ENCODE measurements at regions of chr22 and their contacts with region 1.

Region 1: GRCh38 chr22:27804470-27805297 is 3.1 kb upstream of the MN1 start:
- DNase-seq: no peak
- H3K4me3 ChIP-seq: no peak overlapping the region
- H3K27ac ChIP-seq: no peak overlapping the region
- H3K4me1 ChIP-seq: peaks cover 34% of the 10 kb centered on the region
- H3K27me3 ChIP-seq: no peaks in the 10 kb centered on the region
- CTCF ChIP-seq: peak; percentile 37 to 62 (median 52)
- POLR2A ChIP-seq: no peak

Region 2: DNA sequence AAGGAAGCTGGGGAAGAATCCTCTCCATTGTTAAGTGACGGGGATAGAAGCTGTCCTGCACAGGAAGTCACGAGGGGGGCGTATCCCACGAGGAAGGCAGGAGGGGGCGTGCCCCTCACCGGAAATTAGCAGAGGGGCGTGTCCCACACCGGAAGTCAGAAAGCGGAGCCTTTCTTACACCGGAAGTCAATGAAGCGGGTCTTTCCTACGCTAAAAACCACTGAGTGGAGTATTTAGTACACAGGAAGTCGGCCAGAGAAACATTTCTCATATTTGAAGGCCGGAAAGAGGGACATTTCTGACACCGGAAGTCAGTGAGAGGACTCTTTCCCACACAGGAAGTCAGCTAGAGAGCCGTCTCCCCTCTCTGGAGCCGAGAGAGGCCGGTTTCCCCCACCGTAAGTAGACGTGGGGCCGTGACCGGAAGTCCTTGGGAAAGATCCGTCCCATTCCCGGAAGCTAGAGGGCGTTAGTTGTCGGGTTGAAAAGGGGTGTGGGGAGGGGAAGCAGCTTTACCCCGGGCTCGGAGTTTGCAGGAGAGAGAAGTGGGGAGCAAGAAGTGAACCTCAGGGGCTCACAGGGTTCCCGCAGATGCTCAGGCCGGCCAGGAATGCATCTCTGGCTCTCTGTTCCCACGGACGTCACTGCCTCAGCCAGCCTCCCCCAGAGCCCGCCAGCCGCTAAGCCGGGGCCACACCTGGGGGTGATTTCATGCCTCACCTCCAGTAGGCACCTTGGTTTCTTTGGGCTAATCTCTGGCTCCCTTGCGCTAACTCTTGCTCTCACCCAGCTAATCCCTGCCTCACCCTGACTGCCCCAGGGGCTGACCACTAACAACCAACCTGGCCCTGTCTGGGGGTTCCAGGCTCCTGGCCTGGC is 1131.9 kb before region 1 on chr22:
- intact Hi-C with region 1: loop called (anchors 10 kb)
- DNase-seq: peak in 1 of 2 donors; percentile 97
- H3K4me3 ChIP-seq: peak overlapping the region; percentile 74 to 80
- H3K27ac ChIP-seq: peak overlapping the region; percentile 95
- H3K4me1 ChIP-seq: peaks cover 28% of the 10 kb centered on the region
- H3K27me3 ChIP-seq: no peaks in the 10 kb centered on the region
- CTCF ChIP-seq: peak in 2 of 3 experiments; percentile 36 to 65
- POLR2A ChIP-seq: no peak

Region 3: DNA sequence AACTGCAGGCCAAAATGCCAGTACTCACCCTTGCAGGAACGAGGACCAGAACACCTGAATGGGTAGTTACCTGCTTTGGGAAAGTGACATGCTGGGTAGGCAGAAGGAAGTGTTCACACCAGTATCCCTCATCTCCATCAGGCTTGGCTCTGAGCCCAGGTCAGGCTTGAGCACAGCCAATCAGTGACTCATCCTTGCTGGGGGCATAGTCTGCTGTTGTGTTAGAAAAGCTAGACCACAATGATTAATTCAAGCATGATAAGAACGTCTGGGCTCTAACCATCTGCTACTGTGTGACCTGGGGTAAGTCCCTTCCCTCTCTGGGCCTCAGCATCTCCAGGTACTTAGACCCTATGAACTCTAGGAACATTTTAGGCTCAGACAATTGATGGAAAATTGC is 696.9 kb before region 1 on chr22:
- intact Hi-C with region 1: loop called (anchors 10 kb)
- DNase-seq: no peak
- H3K4me3 ChIP-seq: no peak overlapping the region
- H3K27ac ChIP-seq: peak overlapping the region; percentile 71
- H3K4me1 ChIP-seq: peaks cover 34% of the 10 kb centered on the region
- H3K27me3 ChIP-seq: no peaks in the 10 kb centered on the region
- CTCF ChIP-seq: no peak
- POLR2A ChIP-seq: no peak

Region 4: DNA sequence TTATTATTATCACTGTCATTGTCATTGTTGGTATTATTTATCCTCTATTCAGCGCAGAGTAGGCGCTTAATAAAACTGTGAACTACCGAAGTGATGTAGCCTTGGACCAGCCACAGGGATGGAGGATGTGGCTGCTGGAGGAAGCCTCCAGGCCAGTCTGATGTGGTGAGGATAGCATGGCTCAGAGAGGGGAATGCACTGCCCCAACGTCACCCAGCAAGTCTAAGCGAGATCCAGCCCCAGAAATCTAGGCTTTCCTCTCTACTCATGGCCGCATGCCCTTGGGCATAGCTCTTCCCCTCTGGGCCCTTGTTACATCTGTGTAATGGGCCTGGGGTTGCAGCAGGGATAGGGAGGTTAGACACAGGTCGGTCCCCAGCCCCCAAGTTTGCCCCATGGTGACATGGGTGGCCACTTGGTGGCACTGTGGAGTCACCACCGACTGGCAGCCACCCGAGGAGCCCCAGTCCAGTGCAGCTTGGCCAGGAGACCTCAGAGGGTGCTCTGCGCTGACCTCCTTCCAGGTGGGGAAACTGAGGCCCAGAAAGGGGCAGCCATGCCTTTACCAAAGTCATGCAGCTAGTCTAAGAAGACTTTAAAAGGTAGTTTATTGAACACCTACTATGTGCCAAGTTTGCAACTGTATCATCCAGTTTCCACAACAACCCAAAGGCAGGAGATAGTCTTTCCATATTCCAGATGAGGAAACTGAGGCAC is 398.9 kb before region 1 on chr22:
- intact Hi-C with region 1: loop called (anchors 5 kb)
- DNase-seq: no peak
- H3K4me3 ChIP-seq: no peak overlapping the region
- H3K27ac ChIP-seq: no peak overlapping the region
- H3K4me1 ChIP-seq: no peaks in the 10 kb centered on the region
- H3K27me3 ChIP-seq: no peaks in the 10 kb centered on the region
- CTCF ChIP-seq: peak in 2 of 3 experiments; percentile 13 to 26
- POLR2A ChIP-seq: no peak

Region 5: DNA sequence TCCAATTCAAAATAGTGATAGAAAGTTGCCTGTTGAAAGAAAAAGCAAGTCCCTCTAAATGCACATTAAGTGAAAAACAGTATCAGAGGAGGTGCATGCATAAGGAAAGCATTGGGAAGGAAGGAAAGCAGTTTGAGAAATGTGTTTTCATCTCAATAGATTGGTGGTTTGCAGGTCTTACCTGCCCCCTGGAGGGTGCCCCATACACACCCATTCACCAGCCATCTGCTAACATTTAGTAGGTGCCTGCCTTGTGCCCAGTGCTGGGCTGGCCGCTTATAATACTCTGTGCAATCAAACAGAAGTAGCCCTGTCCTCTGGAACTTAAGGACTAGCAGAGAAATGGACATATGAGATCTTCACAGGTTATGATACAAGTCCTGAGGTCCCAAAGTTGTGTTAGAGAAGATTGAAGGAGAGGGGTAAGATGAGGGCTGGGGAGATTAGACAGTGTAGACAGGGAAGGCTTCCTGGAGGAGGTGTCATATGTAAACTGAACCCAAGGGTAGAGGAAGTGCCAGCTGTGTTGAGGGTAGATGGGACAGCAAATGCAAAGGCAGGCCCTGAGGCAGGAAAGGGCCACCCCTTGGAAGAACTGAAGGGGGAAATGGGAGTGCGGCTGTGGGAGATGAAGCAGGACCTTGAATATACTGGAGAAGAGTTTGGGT is 187.3 kb before region 1 on chr22:
- intact Hi-C with region 1: loop called (anchors 10 kb)
- DNase-seq: no peak
- H3K4me3 ChIP-seq: no peak overlapping the region
- H3K27ac ChIP-seq: no peak overlapping the region
- H3K4me1 ChIP-seq: peaks cover 8% of the 10 kb centered on the region
- H3K27me3 ChIP-seq: no peaks in the 10 kb centered on the region
- CTCF ChIP-seq: no peak
- POLR2A ChIP-seq: no peak

Region 6: GRCh38 chr22:27879923-27880322 is 75.2 kb after region 1 on chr22:
- intact Hi-C with region 1: loop called (anchors 10 kb)
- DNase-seq: no peak
- H3K4me3 ChIP-seq: no peak overlapping the region
- H3K27ac ChIP-seq: peak overlapping the region; percentile 77
- H3K4me1 ChIP-seq: peaks cover 39% of the 10 kb centered on the region
- H3K27me3 ChIP-seq: no peaks in the 10 kb centered on the region
- CTCF ChIP-seq: peak in 2 of 3 experiments; percentile 1 to 37
- POLR2A ChIP-seq: no peak

Measured in vagina (tissue), 2 donors.